Motor neuron (in vitro differentiated cells): ENCODE measurements at regions of chr2 and their contacts with region 1.

Region 1: DNA sequence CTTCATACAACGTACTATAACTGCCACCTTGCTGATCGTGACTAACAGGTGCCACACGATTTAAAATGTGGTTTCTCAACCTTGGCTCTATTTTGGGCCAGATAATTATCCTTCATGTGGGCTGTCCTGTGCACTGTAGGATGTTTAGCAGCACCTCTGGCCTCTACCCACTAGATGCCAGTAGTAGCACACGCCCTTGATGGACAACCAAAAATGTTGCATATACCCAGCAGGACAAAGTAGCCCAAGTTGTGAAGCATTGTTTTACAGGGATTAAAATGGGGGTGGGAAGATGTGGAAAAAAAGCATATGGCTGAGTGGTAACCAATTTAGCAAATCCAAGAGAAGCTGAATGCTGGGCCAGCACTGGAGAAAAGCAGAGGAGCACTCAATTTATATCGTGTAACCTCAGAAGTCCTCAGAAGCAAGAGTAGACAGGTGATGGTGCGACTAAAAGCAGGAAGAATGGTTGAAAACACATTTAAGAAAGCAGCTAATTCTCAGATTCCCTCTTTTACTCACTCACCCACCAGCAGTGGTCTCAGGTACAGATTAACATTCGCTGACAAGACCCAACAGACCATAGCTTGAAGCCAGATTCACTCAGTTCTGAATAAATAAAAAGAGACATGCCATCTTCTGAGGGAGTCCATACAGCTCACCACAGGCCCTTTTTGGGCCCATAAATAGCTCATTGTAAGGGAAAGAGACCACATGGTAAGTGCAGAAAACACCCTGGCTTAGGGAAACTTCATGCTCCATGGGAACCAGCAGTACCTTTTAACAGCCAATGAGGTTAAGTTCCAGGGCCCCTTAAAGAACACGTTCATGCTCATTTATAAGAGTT is 50.6 kb downstream of the RAPH1 start:
- ATAC-seq: peak in 3 of 8 experiments; percentile 87 to 92 (median 89)
- H3K4me3 ChIP-seq: no peak overlapping the region
- H3K27ac ChIP-seq: no peak overlapping the region
- H3K4me1 ChIP-seq: no peaks in the 10 kb centered on the region

Region 2: DNA sequence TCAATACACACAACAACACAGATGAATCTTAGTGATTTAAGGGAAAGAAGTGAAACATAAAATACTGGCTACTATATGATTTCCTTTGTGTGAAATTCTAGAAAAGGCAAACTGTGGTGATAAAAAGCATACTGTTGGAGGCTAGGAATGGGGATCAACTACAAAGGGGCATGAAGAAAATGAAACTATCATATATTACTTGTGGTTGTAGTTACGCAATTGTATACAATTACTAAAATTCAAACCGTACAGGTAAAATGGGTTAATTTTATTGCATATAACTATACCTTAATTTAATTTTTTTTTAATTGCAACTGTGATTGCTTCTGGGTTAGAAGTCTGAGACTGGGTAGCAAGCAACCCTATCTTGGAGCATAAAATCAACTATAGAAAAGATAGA is 198.0 kb before region 1 on chr2:
- in situ Hi-C with region 1: no loop called
- ATAC-seq: no peak
- H3K4me3 ChIP-seq: no peak overlapping the region
- H3K27ac ChIP-seq: no peak overlapping the region
- H3K4me1 ChIP-seq: no peaks in the 10 kb centered on the region

Region 3: GRCh38 chr2:203650860-203651613 is 166.5 kb after region 1 on chr2:
- in situ Hi-C with region 1: loop called in 2 of 9 experiments (anchors 10 to 25 kb)
- ATAC-seq: peak in 7 of 8 experiments; percentile 52 to 83 (median 74)
- H3K4me3 ChIP-seq: no peak overlapping the region
- H3K27ac ChIP-seq: no peak overlapping the region
- H3K4me1 ChIP-seq: peaks cover under 1 to 7% of the 10 kb centered on the region in 2 donors

Region 4: DNA sequence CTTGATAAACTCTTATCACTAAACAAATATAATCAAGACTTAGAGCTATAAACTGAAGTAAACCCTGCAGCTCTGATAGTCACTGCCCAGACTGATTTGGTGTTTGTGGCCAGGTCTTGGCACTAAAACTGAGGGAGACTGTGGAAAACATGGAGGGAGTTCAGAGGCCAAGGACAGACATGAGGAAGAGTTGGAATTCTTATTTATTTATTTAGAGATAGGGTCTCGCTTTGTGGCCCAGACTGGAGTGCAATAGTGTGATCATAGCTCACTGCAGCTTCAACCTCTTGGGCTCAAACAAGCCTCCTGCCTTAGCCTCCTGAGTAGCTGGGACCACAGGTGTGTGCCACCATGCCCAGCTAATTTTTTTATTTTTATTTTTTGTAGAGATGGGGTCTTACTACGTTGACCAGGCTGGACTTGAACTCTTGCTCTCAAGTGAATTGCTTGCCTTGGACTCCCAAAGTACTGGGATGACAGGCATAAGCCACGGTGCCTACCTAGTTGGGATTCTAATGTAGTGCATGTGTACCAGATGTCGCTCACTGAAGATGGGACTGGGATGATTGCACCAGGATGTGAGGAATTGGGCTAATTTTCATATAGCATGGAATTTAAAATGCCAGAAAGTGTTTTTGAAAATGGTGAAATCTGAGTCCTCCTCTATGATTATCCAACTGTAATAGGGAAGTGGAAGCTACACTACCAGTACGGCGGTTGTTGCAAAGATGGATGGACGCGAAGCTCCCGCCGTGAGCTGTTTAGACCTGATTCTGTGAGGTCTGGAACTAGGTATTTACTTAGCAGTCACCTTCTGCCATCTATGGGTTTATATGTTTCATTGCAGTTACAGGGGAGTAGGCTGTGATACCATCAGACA is 330.4 kb after region 1 on chr2:
- in situ Hi-C with region 1: loop called in 2 of 9 experiments (anchors 25 kb)
- ATAC-seq: peak; percentile 82 to 97 (median 88)
- H3K4me3 ChIP-seq: peak overlapping the region in 2 of 5 donors; percentile 7 to 9
- H3K27ac ChIP-seq: no peak overlapping the region
- H3K4me1 ChIP-seq: peaks cover 0 to 13% of the 10 kb centered on the region in 2 donors